ENCODE measurements at regions of chr6 and their contacts with region 1.

Region 1: GRCh38 chr6:3929281-3929798 is 80.2 kb downstream of the FAM50B start:
- DNase-seq: no peak
- H3K4me3 ChIP-seq: no peak overlapping the region
- H3K4me3 Mint-ChIP-seq: no peak overlapping the region
- H3K27ac Mint-ChIP-seq: no peak overlapping the region
- H3K4me1 ChIP-seq: no peaks in the 10 kb centered on the region
- H3K4me1 Mint-ChIP-seq: no peaks in the 10 kb centered on the region
- H3K27me3 ChIP-seq: no peaks in the 10 kb centered on the region
- H3K27me3 Mint-ChIP-seq: no peaks in the 10 kb centered on the region
- CTCF ChIP-seq: no peak

Region 2: DNA sequence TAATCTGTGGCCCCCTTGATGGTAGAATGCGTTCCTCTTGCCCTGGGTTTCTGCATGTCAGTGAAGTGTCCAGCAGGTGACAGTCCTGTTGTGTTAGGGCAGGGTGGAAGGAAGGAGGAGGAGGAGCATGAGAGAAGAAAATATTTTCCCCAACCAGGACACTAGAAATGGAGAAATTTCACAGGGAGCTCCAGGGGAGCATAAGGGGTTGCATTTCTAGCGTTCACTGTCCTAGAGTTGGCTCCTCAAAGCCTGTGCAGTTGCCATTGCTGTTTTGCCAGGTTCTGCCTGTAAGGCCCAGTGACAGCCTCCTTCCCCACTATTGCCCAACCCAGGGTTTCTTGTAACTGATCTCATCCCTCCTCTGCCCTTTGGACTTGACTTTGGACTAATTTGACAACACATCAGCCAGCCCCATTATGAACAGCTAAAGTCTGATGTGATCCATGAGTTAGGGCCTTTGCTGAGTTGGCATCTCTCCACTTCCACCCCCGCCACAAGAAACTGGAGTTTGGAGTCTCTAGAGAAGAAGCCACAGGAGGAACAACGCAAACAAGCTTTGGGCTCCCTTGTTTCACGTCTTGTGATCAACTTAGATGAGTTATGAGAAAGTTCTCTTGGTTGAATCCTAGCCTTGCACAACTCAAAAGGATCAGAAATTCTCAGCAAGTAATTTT is 94.1 kb before region 1 on chr6:
- CTCF ChIA-PET with region 1: interaction called, 16 read pairs
- POLR2A ChIA-PET with region 1: no interaction called
- intact Hi-C with region 1: loop called (anchors 1 kb)
- DNase-seq: peak; percentile 62
- H3K4me3 ChIP-seq: no peak overlapping the region
- H3K4me3 Mint-ChIP-seq: no peak overlapping the region
- H3K27ac Mint-ChIP-seq: no peak overlapping the region
- H3K4me1 ChIP-seq: peaks cover 11% of the 10 kb centered on the region
- H3K4me1 Mint-ChIP-seq: peaks cover 7% of the 10 kb centered on the region
- H3K27me3 ChIP-seq: no peaks in the 10 kb centered on the region
- H3K27me3 Mint-ChIP-seq: no peaks in the 10 kb centered on the region
- CTCF ChIP-seq: peak; percentile 65 to 73

Region 3: DNA sequence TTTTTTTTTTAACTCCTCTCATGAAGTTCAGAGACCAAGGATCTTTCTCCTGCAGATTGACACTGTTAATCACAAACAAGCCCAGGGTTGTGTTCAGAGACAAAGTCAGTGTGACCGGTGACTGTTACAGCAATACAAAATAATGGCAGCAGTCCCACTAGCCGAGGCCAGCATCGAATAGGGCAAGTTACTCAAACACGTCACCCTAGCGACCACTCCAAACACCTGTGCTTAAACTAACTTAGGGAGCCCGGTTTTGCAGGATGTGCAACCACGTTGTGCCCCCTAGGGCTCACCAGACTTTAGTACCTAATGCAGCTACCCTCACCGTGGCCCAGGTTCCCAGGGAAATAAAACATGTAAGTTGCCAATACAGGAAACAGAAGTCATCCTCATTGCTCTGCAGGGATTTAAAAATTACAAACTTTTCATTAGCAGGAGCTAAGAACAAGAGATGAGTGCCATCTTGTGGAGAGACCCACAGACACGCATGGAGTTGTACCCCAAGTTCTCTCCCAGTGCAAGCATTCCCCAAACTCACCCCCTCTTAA is 42.1 kb before region 1 on chr6:
- CTCF ChIA-PET with region 1: interaction called, 22 read pairs
- POLR2A ChIA-PET with region 1: no interaction called
- intact Hi-C with region 1: loop called (anchors 1 kb)
- DNase-seq: no peak
- H3K4me3 ChIP-seq: no peak overlapping the region
- H3K4me3 Mint-ChIP-seq: no peak overlapping the region
- H3K27ac Mint-ChIP-seq: no peak overlapping the region
- H3K4me1 ChIP-seq: peaks cover 16% of the 10 kb centered on the region
- H3K4me1 Mint-ChIP-seq: peaks cover 16% of the 10 kb centered on the region
- H3K27me3 ChIP-seq: no peaks in the 10 kb centered on the region
- H3K27me3 Mint-ChIP-seq: no peaks in the 10 kb centered on the region
- CTCF ChIP-seq: no peak

Region 4: GRCh38 chr6:4155848-4156466 is 226.6 kb after region 1 on chr6:
- CTCF ChIA-PET with region 1: no interaction called
- POLR2A ChIA-PET with region 1: no interaction called
- intact Hi-C with region 1: no loop called
- DNase-seq: peak; percentile 77 to 79
- H3K4me3 ChIP-seq: no peak overlapping the region
- H3K4me3 Mint-ChIP-seq: no peak overlapping the region
- H3K27ac Mint-ChIP-seq: no peak overlapping the region
- H3K4me1 ChIP-seq: no peaks in the 10 kb centered on the region
- H3K4me1 Mint-ChIP-seq: no peaks in the 10 kb centered on the region
- H3K27me3 ChIP-seq: no peaks in the 10 kb centered on the region
- H3K27me3 Mint-ChIP-seq: peaks cover 12% of the 10 kb centered on the region
- CTCF ChIP-seq: peak; percentile 83 to 84

Measured in Caco-2 (cell line).